AG04450 (cell line): ENCODE measurements at regions of chr18 and their contacts with region 1.

Region 1: DNA sequence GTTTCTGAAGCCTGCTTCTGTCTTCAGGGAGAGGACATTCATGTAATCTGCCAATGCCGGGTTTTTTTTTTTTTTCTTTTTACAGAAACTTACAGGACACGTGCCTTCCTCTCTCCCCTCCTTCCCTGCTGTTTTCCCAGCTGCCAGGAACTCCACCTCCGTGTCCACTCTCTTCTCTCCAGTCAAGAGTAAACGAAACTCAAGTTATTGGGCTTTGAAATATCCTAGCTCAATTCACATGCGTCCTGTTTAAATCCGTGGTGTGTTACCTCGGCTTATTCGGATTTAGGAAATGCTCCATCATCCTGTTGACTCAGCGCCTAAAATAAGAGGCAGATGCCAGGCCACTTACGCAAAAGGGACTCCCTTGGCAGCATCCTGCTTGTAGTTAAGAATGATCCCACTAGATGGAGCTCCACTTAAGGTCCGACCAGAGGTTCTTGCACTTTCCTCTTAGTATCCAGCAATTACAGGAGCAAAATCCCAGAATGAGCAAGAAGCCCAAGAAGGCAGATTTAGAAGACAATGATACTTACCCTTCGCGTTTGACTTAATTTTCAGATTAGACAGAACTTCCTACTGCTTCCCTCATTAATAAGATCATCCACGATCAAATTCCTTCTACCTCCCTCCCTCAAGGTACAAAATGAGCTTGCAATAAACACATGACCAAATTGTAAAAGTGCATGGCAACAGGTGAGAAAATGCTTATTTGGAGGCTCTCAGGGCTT is 97.2 kb upstream of the ZCCHC2 start:
- DNase-seq: peak; percentile 92
- H3K4me3 ChIP-seq: peak overlapping the region; percentile 55
- H3K27ac ChIP-seq: peak overlapping the region; percentile 77
- H3K27me3 ChIP-seq: peaks cover 11% of the 10 kb centered on the region
- CTCF ChIP-seq: peak; percentile 91

Region 2: GRCh38 chr18:62437235-62438017 is 11.8 kb after region 1 on chr18:
- CTCF ChIA-PET with region 1: interaction called, 18 read pairs
- POLR2A ChIA-PET with region 1: interaction called, 5 read pairs
- DNase-seq: no peak
- H3K4me3 ChIP-seq: no peak overlapping the region
- H3K27ac ChIP-seq: no peak overlapping the region
- H3K27me3 ChIP-seq: peaks cover 12% of the 10 kb centered on the region
- CTCF ChIP-seq: no peak

Region 3: GRCh38 chr18:62460851-62461300 is 35.2 kb after region 1 on chr18:
- CTCF ChIA-PET with region 1: interaction called, 11 read pairs
- POLR2A ChIA-PET with region 1: no interaction called
- DNase-seq: no peak
- H3K4me3 ChIP-seq: no peak overlapping the region
- H3K27ac ChIP-seq: no peak overlapping the region
- H3K27me3 ChIP-seq: peaks cover 2% of the 10 kb centered on the region
- CTCF ChIP-seq: no peak

Region 4: GRCh38 chr18:62522504-62523254 is 97.0 kb after region 1 on chr18 and contains the start of gene ZCCHC2:
- CTCF ChIA-PET with region 1: interaction called, 14 read pairs
- POLR2A ChIA-PET with region 1: interaction called, 3 read pairs
- DNase-seq: peak; percentile 94
- H3K4me3 ChIP-seq: peak within 1 kb of the TSS; percentile 78
- H3K27ac ChIP-seq: peak within 1 kb of the TSS; percentile 91
- H3K27me3 ChIP-seq: peaks cover 2% of the 10 kb centered on the region
- CTCF ChIP-seq: no peak
- polyA plus RNA-seq, gene ZCCHC2: 4.9 and 5.8 TPM in 2 replicates

Region 5: GRCh38 chr18:62576845-62577512 is 151.3 kb after region 1 on chr18:
- CTCF ChIA-PET with region 1: interaction called, 35 read pairs
- POLR2A ChIA-PET with region 1: no interaction called
- DNase-seq: no peak
- H3K4me3 ChIP-seq: no peak overlapping the region
- H3K27ac ChIP-seq: no peak overlapping the region
- H3K27me3 ChIP-seq: no peaks in the 10 kb centered on the region
- CTCF ChIP-seq: no peak